CD14-positive monocyte (primary cell): ENCODE measurements at regions of chr18 and their contacts with region 1.

Region 1: DNA sequence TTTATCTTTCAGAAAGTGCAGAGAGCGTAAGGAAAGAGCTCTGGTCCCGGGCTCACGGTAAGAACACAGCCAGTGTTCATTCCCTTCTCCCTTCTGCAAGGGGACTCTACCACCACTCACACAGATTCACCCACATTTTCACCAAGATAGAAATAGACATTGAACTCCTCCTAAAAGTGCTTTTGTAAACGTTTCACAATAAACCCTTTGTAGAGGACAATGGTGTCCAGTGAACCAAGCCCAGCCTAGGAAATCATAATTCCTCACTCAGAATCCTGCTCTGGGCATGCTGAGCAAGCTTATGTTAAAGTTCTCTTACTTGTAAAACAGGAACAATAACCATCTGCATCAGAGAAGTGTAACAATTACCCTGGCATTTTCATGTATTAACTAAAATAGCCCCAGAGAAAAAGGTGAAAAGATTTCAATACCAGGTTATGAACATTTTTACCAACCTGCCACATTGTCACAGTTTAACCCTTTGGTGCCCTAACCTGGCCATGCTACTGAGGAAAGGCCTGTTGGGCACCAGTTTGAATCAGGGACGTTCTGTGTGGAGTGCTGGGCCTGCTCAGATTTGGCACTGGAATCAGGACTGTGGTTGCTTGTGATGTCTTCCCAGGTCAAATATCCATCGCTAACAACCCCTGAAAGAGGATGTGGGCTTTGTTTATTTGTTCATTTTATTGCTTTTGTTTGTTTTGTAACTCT is 22.5 kb upstream of the NDUFV2 start:
- DNase-seq: no peak
- H3K4me3 ChIP-seq: no peak overlapping the region
- H3K4me3 Mint-ChIP-seq: peak overlapping the region in 1 of 2 donors; percentile 42
- H3K27ac ChIP-seq: no peak overlapping the region
- H3K27ac Mint-ChIP-seq: peak overlapping the region in 2 of 7 donors; percentile 35 to 41
- H3K4me1 ChIP-seq: peaks cover 33 to 34% of the 10 kb centered on the region in 2 donors
- H3K4me1 Mint-ChIP-seq: peaks cover 36% of the 10 kb centered on the region
- H3K27me3 ChIP-seq: peaks cover 3% of the 10 kb centered on the region in 2 donors
- H3K27me3 Mint-ChIP-seq: peaks cover 9 to 11% (median 10%) of the 10 kb centered on the region in 3 donors
- CTCF ChIP-seq: no peak

Region 2: DNA sequence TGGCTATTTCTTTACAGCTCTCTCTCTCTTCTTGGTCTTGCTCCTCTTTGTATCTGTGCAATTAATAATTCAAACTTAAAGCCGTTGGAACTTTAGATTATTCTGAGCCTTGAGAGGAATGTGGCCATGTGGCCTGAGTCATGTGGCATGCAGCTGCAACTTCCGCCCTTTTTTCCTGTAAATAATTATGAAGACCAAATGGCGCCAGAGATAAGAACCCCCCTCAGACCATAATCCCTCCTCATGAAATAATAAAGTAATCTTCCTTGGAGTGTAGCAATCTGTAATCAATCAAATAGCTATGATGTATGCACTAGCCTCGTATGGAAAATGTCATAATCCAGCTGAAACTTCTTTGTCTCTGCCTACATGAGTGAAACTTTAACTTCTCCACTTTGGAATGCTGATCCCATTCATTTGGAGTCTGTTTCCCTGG is 241.1 kb after region 1 on chr18:
- intact Hi-C with region 1: loop called in 1 of 2 experiments (anchors 10 kb)
- DNase-seq: no peak
- H3K4me3 ChIP-seq: no peak overlapping the region
- H3K4me3 Mint-ChIP-seq: no peak overlapping the region
- H3K27ac ChIP-seq: no peak overlapping the region
- H3K27ac Mint-ChIP-seq: no peak overlapping the region
- H3K4me1 ChIP-seq: peaks cover 8 to 12% of the 10 kb centered on the region in 2 donors
- H3K4me1 Mint-ChIP-seq: peaks cover 16% of the 10 kb centered on the region
- H3K27me3 ChIP-seq: no peaks in the 10 kb centered on the region
- H3K27me3 Mint-ChIP-seq: peaks cover 0 to 5% (median 1%) of the 10 kb centered on the region in 3 donors
- CTCF ChIP-seq: no peak

Region 3: DNA sequence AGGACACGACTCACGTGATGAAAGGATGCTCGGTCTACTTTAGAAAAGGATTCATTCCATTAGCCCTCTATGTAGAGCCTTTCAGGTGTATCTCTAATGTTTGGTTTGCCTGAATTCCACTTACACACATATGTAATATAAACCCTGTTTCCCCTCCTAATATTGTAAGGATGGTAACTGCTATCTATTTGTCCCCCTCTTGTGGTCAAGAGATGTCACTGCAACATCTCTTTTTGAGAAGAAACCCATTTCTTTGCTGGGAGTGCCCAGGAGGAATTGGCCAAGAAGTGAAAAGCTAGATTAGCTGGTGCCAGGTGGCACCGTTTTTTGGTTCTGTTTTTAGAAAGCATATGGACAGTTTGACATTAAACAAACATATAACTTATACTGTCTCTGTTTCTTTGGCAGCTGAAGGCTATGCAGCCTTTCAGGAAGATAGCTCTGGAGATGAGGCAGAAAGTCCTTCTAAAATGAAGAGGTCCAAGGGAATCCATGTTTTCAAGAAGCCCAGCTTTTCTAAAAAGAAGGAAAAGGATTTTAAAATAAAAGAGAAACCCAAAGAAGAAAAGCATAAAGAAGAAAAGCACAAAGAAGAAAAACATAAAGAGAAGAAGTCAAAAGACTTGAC is 436.6 kb after region 1 on chr18:
- intact Hi-C with region 1: loop called in 1 of 2 experiments (anchors 10 kb)
- DNase-seq: peak; percentile 21 to 56 (median 51)
- H3K4me3 ChIP-seq: no peak overlapping the region
- H3K4me3 Mint-ChIP-seq: no peak overlapping the region
- H3K27ac ChIP-seq: no peak overlapping the region
- H3K27ac Mint-ChIP-seq: no peak overlapping the region
- H3K4me1 ChIP-seq: no peaks in the 10 kb centered on the region
- H3K4me1 Mint-ChIP-seq: no peaks in the 10 kb centered on the region
- H3K27me3 ChIP-seq: no peaks in the 10 kb centered on the region
- H3K27me3 Mint-ChIP-seq: no peaks in the 10 kb centered on the region
- CTCF ChIP-seq: peak; percentile 90